Heart right ventricle (tissue), 16 donors: ENCODE measurements at regions of chr18 and their contacts with region 1.

Region 1: DNA sequence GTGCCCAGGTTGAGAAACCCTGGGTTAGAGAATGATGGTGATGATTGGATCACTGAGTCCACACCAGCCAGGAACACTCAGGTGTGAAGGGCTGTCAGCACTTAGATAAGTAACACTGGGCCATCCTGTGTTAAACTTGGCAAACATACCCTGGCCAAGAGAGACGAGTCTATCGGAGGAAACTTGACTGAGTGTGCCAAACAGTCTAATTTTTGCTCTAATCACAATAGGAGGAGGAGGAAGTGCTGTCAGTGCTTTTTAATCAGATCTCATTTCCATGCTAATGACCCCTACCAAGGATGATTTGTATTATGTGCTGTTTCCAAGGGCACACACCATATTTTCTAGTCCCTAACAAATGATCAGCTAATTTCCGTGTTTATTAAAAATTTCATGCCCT is 63.8 kb upstream of the SEC11C start:
- DNase-seq: no peak
- ATAC-seq: peak in 7 of 8 donors; percentile 20 to 65 (median 56)
- H3K4me3 ChIP-seq: no peak overlapping the region
- H3K27ac ChIP-seq: no peak overlapping the region
- H3K4me1 ChIP-seq: peaks cover 0 to 10% (median 0%) of the 10 kb centered on the region in 9 donors
- H3K27me3 ChIP-seq: peaks cover 0 to 5% (median 0%) of the 10 kb centered on the region in 7 donors
- CTCF ChIP-seq: no peak

Region 2: DNA sequence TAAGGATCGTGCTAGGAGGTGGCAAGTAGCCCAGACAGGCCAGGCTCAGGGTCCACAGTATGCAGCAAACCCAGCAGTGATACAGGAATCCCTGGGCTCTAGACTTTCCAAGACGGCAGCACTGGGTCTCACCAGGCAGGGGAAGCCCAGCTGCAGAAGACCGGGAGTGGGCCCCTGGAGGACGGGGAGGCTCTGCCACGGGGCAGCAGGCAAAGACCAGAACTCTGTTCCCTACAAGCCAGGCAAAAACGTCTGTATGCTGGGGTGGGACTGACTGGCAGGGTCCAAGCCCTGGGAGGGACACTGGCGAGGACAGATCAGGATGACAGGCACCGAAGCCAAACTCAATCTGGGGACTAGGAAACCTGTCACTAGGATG is 35.2 kb before region 1 on chr18:
- intact Hi-C with region 1: loop called in 1 of 10 experiments (anchors 1 kb)
- DNase-seq: no peak
- ATAC-seq: peak in 1 of 8 donors; percentile 49
- H3K4me3 ChIP-seq: no peak overlapping the region
- H3K27ac ChIP-seq: no peak overlapping the region
- H3K4me1 ChIP-seq: peaks cover 0 to 41% (median 14%) of the 10 kb centered on the region in 9 donors
- H3K27me3 ChIP-seq: no peaks in the 10 kb centered on the region
- CTCF ChIP-seq: no peak

Region 3: DNA sequence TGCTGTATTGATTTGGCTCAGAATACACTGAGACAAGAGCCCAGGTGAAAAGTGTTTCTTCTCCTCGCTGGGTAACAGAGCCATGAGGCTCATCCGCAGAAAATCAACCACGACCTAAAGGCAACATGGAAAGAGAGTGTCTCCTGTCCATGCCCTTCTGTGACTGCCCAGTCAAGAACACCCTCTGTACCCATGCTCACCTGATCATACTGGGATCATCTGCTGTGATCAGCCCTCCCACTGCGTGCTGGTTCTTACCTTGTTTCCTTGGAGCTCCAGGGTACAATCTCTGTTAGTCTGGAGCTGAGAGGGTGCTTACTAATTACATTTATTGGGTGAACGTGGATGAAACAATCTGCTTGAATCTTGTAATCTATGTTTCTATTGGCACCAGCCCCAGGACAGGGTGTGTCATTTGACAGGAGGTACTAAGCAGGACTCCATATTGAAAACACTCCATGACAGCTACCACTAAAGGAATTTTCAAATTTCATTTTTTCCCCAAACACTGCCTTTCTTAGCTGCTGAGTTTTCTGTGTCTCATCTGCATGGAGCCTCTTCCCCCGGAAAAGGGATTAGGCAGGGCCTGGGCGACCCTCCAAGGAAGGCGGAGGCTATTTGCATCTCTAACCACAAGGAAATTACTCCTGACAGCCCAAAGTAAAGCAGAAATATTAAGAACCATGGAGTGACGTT is 104.4 kb after region 1 on chr18:
- intact Hi-C with region 1: no loop called
- DNase-seq: no peak
- ATAC-seq: no peak
- H3K4me3 ChIP-seq: no peak overlapping the region
- H3K27ac ChIP-seq: no peak overlapping the region
- H3K4me1 ChIP-seq: no peaks in the 10 kb centered on the region
- H3K27me3 ChIP-seq: peaks cover 0 to 16% (median 0%) of the 10 kb centered on the region in 7 donors
- CTCF ChIP-seq: no peak